Sciatic nerve (tissue), 2 donors: ENCODE measurements at regions of chr9 and their contacts with region 1.

Region 1: GRCh38 chr9:121213136-121213806 is 11.6 kb upstream of the RAB14 start:
- DNase-seq: peak; percentile 94
- ATAC-seq: peak; percentile 97

Region 2: DNA sequence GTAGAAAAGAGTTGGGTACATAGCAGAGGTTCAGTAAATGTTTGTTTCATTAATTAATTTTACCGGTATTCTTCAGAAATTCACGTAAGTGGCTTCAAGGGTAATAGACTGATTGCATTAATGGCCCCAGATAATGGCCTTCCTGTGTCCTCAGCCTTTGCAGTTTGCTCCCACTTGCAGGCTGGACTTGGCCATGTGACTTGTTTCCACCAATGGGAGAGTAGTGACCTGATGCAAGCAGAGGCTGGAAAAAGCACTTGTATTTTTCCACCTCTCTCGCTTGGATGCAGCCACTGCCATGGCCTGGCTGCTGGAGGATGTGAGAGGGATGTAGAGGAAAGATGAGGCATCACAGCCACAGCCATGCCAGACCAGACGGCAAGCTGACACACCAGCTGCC is 1114.2 kb before region 1 on chr9:
- intact Hi-C with region 1: no loop called
- DNase-seq: no peak
- ATAC-seq: no peak

Region 3: GRCh38 chr9:121267689-121268597 is 54.7 kb after region 1 on chr9 and contains the start of gene GSN:
- intact Hi-C with region 1: loop called (anchors 10 kb)
- DNase-seq: peak; percentile 92
- ATAC-seq: peak; percentile 85
- total RNA-seq, gene GSN: 1,757 TPM

Region 4: GRCh38 chr9:121317742-121318489 is 104.6 kb after region 1 on chr9:
- intact Hi-C with region 1: loop called (anchors 10 kb)
- DNase-seq: peak; percentile 57
- ATAC-seq: no peak